ENCODE measurements at regions of chr1 and their contacts with region 1.

Region 1: GRCh38 chr1:93846211-93846991 is 32.6 kb downstream of the DNTTIP2 start:
- DNase-seq: peak; percentile 53 to 94
- H3K4me3 ChIP-seq: peak overlapping the region; percentile 73 to 91
- H3K27ac ChIP-seq: peak overlapping the region; percentile 92 to 100
- H3K4me1 ChIP-seq: peaks cover 0 to 21% of the 10 kb centered on the region in 2 donors
- H3K27me3 ChIP-seq: no peaks in the 10 kb centered on the region
- CTCF ChIP-seq: peak; percentile 14 to 37 (median 23)

Region 2: DNA sequence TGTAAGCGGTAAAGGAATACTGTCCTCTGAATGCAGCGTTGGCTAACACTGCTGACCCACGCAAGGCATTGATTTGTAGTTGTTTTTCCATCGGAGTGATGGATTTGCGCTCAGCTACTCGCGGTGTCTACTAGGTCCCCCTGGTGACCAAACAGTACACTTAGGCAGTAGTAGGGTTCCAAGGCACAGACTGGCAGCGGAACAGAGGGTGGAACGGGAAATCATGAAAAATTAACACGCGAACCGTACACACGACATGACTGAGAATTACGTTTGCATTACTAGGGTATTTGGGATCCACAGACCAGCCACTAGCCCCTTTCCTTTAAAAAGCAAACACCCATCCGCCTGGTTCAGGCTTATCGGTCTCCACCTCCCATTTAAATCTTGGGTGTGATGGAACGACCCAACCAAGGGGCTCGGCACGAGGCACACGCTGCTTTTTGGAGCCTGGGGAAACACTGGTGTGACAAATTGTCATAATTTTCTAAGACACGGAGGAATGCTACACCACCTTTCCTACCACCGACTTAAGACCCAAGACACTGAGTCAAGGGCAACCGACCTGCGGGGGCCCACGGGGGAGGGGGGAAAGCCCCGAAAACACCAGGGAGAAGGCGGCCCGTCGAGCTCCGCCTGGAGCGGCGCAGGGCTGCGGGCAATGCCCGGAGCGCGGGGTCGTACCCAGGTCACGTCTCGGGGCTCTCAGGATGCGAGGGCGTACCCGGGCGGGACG is 885.8 kb before region 1 on chr1:
- intact Hi-C with region 1: loop called (anchors 10 kb)
- DNase-seq: peak; percentile 33 to 83
- H3K4me3 ChIP-seq: peak overlapping the region; percentile 67 to 92
- H3K27ac ChIP-seq: peak overlapping the region; percentile 92 to 98
- H3K4me1 ChIP-seq: peaks cover 0 to 16% of the 10 kb centered on the region in 2 donors
- H3K27me3 ChIP-seq: no peaks in the 10 kb centered on the region
- CTCF ChIP-seq: peak; percentile 64 to 75 (median 71)

Region 3: GRCh38 chr1:93304716-93305138 is 541.7 kb before region 1 on chr1:
- intact Hi-C with region 1: loop called (anchors 5 kb)
- DNase-seq: peak in 1 of 2 donors; percentile 69
- H3K4me3 ChIP-seq: no peak overlapping the region
- H3K27ac ChIP-seq: no peak overlapping the region
- H3K4me1 ChIP-seq: no peaks in the 10 kb centered on the region
- H3K27me3 ChIP-seq: no peaks in the 10 kb centered on the region
- CTCF ChIP-seq: peak; percentile 39 to 90 (median 84)

Region 4: GRCh38 chr1:93437976-93438605 is 408.3 kb before region 1 on chr1:
- intact Hi-C with region 1: loop called (anchors 2 kb)
- DNase-seq: no peak
- H3K4me3 ChIP-seq: no peak overlapping the region
- H3K27ac ChIP-seq: no peak overlapping the region
- H3K4me1 ChIP-seq: no peaks in the 10 kb centered on the region
- H3K27me3 ChIP-seq: no peaks in the 10 kb centered on the region
- CTCF ChIP-seq: peak; percentile 52 to 73 (median 62)

Region 5: GRCh38 chr1:93680757-93681550 is 165.4 kb before region 1 on chr1:
- intact Hi-C with region 1: loop called (anchors 5 kb)
- DNase-seq: peak; percentile 63 to 90
- H3K4me3 ChIP-seq: peak overlapping the region; percentile 79 to 93
- H3K27ac ChIP-seq: peak overlapping the region; percentile 90 to 92
- H3K4me1 ChIP-seq: peaks cover 2 to 11% of the 10 kb centered on the region in 2 donors
- H3K27me3 ChIP-seq: no peaks in the 10 kb centered on the region
- CTCF ChIP-seq: peak; percentile 61 to 66 (median 66)

Region 6: GRCh38 chr1:93909146-93910050 is 63.0 kb after region 1 on chr1 and contains the start of gene GCLM:
- intact Hi-C with region 1: loop called (anchors 2 kb)
- DNase-seq: peak; percentile 79 to 97
- H3K4me3 ChIP-seq: peak within 1 kb of the TSS; percentile 92 to 96
- H3K27ac ChIP-seq: peak within 1 kb of the TSS; percentile 82 to 89
- H3K4me1 ChIP-seq: peaks cover 0 to 7% of the 10 kb centered on the region in 2 donors
- H3K27me3 ChIP-seq: no peaks in the 10 kb centered on the region
- CTCF ChIP-seq: peak; percentile 67 to 95 (median 80)
- total RNA-seq, gene GCLM: 3.3 TPM

Region 7: GRCh38 chr1:93980320-93981273 is 134.2 kb after region 1 on chr1:
- intact Hi-C with region 1: no loop called
- DNase-seq: no peak
- H3K4me3 ChIP-seq: no peak overlapping the region
- H3K27ac ChIP-seq: no peak overlapping the region
- H3K4me1 ChIP-seq: no peaks in the 10 kb centered on the region
- H3K27me3 ChIP-seq: no peaks in the 10 kb centered on the region
- CTCF ChIP-seq: no peak